CD8-positive, alpha-beta T cell (primary cell): ENCODE measurements at regions of chr1 and their contacts with region 1.

Region 1: DNA sequence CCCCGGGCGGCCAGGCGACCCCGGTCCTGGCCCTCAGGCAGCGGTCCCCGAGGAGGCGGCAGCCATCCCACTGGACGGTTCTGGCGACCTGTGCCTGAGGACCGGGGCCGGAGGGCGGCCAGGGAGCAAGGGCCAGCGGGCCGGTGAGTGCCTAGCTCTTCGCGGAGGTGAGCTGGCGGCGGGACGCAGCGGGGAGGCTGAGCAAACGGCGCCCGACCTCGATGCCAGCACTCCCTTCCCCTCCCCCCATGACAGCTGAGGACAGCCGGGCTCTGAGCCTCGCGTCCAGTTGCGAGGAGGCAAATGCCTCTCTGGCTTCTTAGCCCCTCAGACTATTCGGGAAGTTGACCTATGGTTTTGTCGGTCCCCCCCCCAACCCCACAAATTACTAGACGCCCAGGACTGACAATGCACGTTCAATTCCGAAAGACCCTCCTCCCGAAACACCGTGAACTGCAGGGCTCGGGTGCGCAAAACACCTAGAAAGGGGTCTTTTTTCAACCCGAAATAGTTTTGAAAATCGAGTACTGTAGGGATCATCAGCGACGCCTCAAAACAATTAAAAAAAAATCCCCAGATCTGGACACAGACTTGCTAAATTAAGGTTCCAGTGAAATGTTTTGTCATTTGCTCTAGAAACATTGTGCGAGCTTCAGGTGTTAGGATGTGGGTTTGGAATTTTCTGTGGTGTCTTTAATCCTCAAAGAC is 8.3 kb downstream of the CDKN2C start:
- DNase-seq: peak in 6 of 9 experiments; percentile 16 to 61 (median 38)
- ATAC-seq: peak; percentile 37
- H3K4me3 ChIP-seq: peak overlapping the region; percentile 63 to 67
- H3K4me3 Mint-ChIP-seq: peak overlapping the region; percentile 84
- H3K27ac ChIP-seq: peak overlapping the region in 1 of 2 experiments; percentile 1
- H3K27ac Mint-ChIP-seq: peak overlapping the region; percentile 34
- H3K4me1 ChIP-seq: peaks cover 24% of the 10 kb centered on the region
- H3K4me1 Mint-ChIP-seq: peaks cover 24% of the 10 kb centered on the region
- H3K27me3 ChIP-seq: no peaks in the 10 kb centered on the region
- H3K27me3 Mint-ChIP-seq: peaks cover 15% of the 10 kb centered on the region
- CTCF ChIP-seq: no peak

Region 2: GRCh38 chr1:50936321-50936720 is 42.0 kb before region 1 on chr1:
- CTCF ChIA-PET with region 1: no interaction called
- POLR2A ChIA-PET with region 1: no interaction called
- intact Hi-C with region 1: loop called in 1 of 2 experiments (anchors 5 kb)
- DNase-seq: no peak
- ATAC-seq: no peak
- H3K4me3 ChIP-seq: no peak overlapping the region
- H3K4me3 Mint-ChIP-seq: no peak overlapping the region
- H3K27ac ChIP-seq: no peak overlapping the region
- H3K27ac Mint-ChIP-seq: no peak overlapping the region
- H3K4me1 ChIP-seq: no peaks in the 10 kb centered on the region
- H3K4me1 Mint-ChIP-seq: peaks cover 33% of the 10 kb centered on the region
- H3K27me3 ChIP-seq: no peaks in the 10 kb centered on the region
- H3K27me3 Mint-ChIP-seq: no peaks in the 10 kb centered on the region
- CTCF ChIP-seq: no peak

Region 3: GRCh38 chr1:50959913-50960844 is 18.1 kb before region 1 on chr1 and contains the start of gene FAF1:
- CTCF ChIA-PET with region 1: no interaction called
- POLR2A ChIA-PET with region 1: interaction called, 8 read pairs
- intact Hi-C with region 1: loop called (anchors 1 kb)
- DNase-seq: peak; percentile 96 to 99 (median 98)
- ATAC-seq: peak; percentile 82
- H3K4me3 ChIP-seq: peak within 1 kb of the TSS; percentile 69 to 82
- H3K4me3 Mint-ChIP-seq: peak within 1 kb of the TSS; percentile 94
- H3K27ac ChIP-seq: peak within 1 kb of the TSS; percentile 74 to 77
- H3K27ac Mint-ChIP-seq: peak within 1 kb of the TSS; percentile 92
- H3K4me1 ChIP-seq: peaks cover 12% of the 10 kb centered on the region
- H3K4me1 Mint-ChIP-seq: peaks cover 31% of the 10 kb centered on the region
- H3K27me3 ChIP-seq: no peaks in the 10 kb centered on the region
- H3K27me3 Mint-ChIP-seq: no peaks in the 10 kb centered on the region
- CTCF ChIP-seq: no peak
- total RNA-seq, gene FAF1: 39.0 to 44.0 TPM

Region 4: GRCh38 chr1:51019811-51020210 is 41.5 kb after region 1 on chr1:
- CTCF ChIA-PET with region 1: no interaction called
- POLR2A ChIA-PET with region 1: no interaction called
- intact Hi-C with region 1: loop called in 1 of 2 experiments (anchors 1 kb)
- DNase-seq: no peak
- ATAC-seq: no peak
- H3K4me3 ChIP-seq: no peak overlapping the region
- H3K4me3 Mint-ChIP-seq: no peak overlapping the region
- H3K27ac ChIP-seq: no peak overlapping the region
- H3K27ac Mint-ChIP-seq: no peak overlapping the region
- H3K4me1 ChIP-seq: no peaks in the 10 kb centered on the region
- H3K4me1 Mint-ChIP-seq: no peaks in the 10 kb centered on the region
- H3K27me3 ChIP-seq: no peaks in the 10 kb centered on the region
- H3K27me3 Mint-ChIP-seq: peaks cover 8% of the 10 kb centered on the region
- CTCF ChIP-seq: no peak